ENCODE measurements at regions of chr7 and their contacts with region 1.

Region 1: DNA sequence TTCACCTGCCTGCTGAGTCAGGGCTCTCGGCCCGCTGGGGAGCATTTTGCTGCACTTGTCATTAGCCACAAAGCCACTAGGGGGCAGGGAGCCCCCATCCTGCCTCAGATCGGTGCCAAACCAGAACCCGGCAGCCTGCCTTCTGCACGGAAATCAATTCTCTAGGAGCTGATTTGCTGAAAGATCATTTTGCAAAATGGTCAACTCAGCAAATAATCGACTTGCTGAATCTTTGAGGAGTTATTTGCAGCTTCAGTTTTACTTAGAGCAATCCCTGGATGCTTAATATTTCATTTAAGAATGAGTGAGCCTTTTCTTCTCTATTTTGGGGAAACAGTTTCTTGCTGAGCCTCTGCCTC is 1.7 kb upstream of the GIMAP8 start:
- DNase-seq: peak; percentile 73 to 91 (median 88)
- ATAC-seq: peak; percentile 73
- H3K4me3 ChIP-seq: peak overlapping the region; percentile 65
- H3K4me3 Mint-ChIP-seq: peak overlapping the region; percentile 94 to 100 (median 98)
- H3K27ac ChIP-seq: peak overlapping the region; percentile 84
- H3K27ac Mint-ChIP-seq: peak overlapping the region; percentile 95 to 99 (median 97)
- H3K4me1 ChIP-seq: peaks cover 32 to 36% of the 10 kb centered on the region in 2 donors
- H3K4me1 Mint-ChIP-seq: peaks cover 36 to 54% (median 43%) of the 10 kb centered on the region in 7 donors
- H3K27me3 ChIP-seq: no peaks in the 10 kb centered on the region
- H3K27me3 Mint-ChIP-seq: no peaks in the 10 kb centered on the region

Region 2: DNA sequence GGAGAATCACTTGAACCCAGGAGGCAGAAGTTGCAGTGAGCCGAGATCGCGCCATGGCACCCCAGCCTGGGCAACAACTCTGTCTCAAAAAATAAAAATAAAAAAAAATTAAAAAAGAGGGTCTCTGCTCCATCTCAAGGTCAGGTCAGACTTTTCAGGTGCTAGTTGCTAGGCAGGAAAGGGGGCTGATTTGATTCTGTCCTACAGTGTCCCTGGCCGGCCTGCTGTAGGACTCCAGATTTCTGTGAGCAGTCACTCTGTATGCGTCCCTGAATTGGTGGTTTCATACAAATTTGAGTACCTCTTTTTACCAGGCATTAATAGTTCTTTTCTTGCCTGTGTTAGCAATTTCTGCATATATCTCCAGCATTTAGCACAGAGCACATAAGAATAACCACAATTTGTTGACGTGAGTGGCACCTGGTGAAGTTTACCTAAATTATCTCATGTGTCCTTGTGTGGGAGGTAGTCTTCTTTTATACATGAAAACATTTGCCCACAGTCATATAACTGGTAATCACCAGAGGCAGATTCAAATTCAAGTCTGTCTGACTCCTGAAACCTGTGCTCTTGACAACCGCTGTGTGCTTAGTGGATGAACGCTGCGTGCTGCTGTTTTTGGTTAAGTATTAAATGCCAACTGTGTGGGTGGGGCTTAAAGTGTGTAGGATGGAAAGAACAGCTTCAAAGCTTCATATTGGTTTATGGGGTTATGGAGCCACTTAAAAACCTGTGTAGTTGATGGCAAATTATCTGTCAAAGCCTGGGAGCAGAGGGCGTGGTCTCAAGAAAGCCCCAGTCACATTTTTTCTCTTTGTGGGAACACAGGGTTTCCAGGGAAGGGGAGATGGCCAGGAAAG is 72.9 kb before region 1 on chr7:
- CTCF ChIA-PET with region 1: no interaction called
- POLR2A ChIA-PET with region 1: no interaction called
- intact Hi-C with region 1: no loop called
- DNase-seq: peak in 6 of 9 donors; percentile 34 to 69 (median 52)
- ATAC-seq: peak; percentile 12
- H3K4me3 ChIP-seq: no peak overlapping the region
- H3K4me3 Mint-ChIP-seq: peak overlapping the region in 9 of 10 donors; percentile 19 to 71 (median 51)
- H3K27ac ChIP-seq: peak overlapping the region; percentile 48
- H3K27ac Mint-ChIP-seq: peak overlapping the region; percentile 12 to 94 (median 90)
- H3K4me1 ChIP-seq: peaks cover 4 to 30% of the 10 kb centered on the region in 2 donors
- H3K4me1 Mint-ChIP-seq: peaks cover 30 to 71% (median 60%) of the 10 kb centered on the region in 7 donors
- H3K27me3 ChIP-seq: no peaks in the 10 kb centered on the region
- H3K27me3 Mint-ChIP-seq: no peaks in the 10 kb centered on the region

Region 3: GRCh38 chr7:150466477-150466876 is 17.7 kb after region 1 on chr7:
- CTCF ChIA-PET with region 1: interaction called, 3 read pairs
- POLR2A ChIA-PET with region 1: interaction called, 580 read pairs
- intact Hi-C with region 1: loop called in 1 of 2 experiments (anchors 1 kb)
- DNase-seq: no peak
- ATAC-seq: no peak
- H3K4me3 ChIP-seq: no peak overlapping the region
- H3K4me3 Mint-ChIP-seq: peak overlapping the region in 7 of 10 donors; percentile 46 to 91 (median 61)
- H3K27ac ChIP-seq: peak overlapping the region; percentile 34
- H3K27ac Mint-ChIP-seq: peak overlapping the region in 7 of 9 donors; percentile 70 to 97 (median 86)
- H3K4me1 ChIP-seq: peaks cover 50 to 60% of the 10 kb centered on the region in 2 donors
- H3K4me1 Mint-ChIP-seq: peaks cover 61 to 98% (median 95%) of the 10 kb centered on the region in 7 donors
- H3K27me3 ChIP-seq: no peaks in the 10 kb centered on the region
- H3K27me3 Mint-ChIP-seq: no peaks in the 10 kb centered on the region

Region 4: DNA sequence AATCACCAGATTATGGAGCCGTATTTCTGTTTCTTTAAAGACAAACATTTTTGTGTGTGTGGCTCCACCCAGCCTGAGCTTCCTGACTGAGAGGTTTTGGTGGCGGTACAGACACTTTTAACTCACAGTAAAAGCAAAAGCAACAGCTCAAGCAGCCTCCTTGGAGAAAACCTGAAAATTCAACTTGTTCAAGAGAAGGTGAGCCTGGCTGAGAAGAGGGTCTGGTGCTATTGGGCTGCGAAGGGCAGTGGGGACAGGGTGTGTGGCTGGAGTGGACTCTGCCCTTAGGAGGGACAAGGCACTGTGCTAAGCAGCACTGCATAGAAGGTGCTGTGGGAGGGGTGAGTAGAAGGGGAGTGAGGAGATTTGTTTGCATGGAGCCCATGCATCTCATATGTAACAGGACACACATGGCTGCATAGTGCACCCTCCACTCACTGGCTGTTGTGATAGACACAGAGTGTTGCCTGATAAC is 66.0 kb after region 1 on chr7 and contains the start of gene GIMAP7:
- CTCF ChIA-PET with region 1: interaction called, 91 read pairs
- POLR2A ChIA-PET with region 1: interaction called, 829 read pairs
- intact Hi-C with region 1: loop called (anchors 1 kb)
- DNase-seq: peak; percentile 38 to 90 (median 82)
- ATAC-seq: peak; percentile 86
- H3K4me3 ChIP-seq: peak within 1 kb of the TSS; percentile 94
- H3K4me3 Mint-ChIP-seq: peak within 1 kb of the TSS; percentile 93 to 100 (median 99)
- H3K27ac ChIP-seq: peak within 1 kb of the TSS; percentile 84
- H3K27ac Mint-ChIP-seq: peak within 1 kb of the TSS; percentile 94 to 99 (median 98)
- H3K4me1 ChIP-seq: peaks cover 45% of the 10 kb centered on the region in 2 donors
- H3K4me1 Mint-ChIP-seq: peaks cover 38 to 48% (median 46%) of the 10 kb centered on the region in 7 donors
- H3K27me3 ChIP-seq: no peaks in the 10 kb centered on the region
- H3K27me3 Mint-ChIP-seq: no peaks in the 10 kb centered on the region
- total RNA-seq, gene GIMAP7: 66.3 to 555 (median 321) TPM

Region 5: GRCh38 chr7:150620617-150621371 is 172.0 kb after region 1 on chr7:
- CTCF ChIA-PET with region 1: interaction called, 3 read pairs
- POLR2A ChIA-PET with region 1: interaction called, 20 read pairs
- intact Hi-C with region 1: no loop called
- DNase-seq: no peak
- ATAC-seq: no peak
- H3K4me3 ChIP-seq: no peak overlapping the region
- H3K4me3 Mint-ChIP-seq: peak overlapping the region; percentile 27 to 73 (median 54)
- H3K27ac ChIP-seq: peak overlapping the region; percentile 60
- H3K27ac Mint-ChIP-seq: peak overlapping the region; percentile 64 to 97 (median 88)
- H3K4me1 ChIP-seq: peaks cover 0 to 25% of the 10 kb centered on the region in 2 donors
- H3K4me1 Mint-ChIP-seq: peaks cover 25 to 84% (median 68%) of the 10 kb centered on the region in 7 donors
- H3K27me3 ChIP-seq: no peaks in the 10 kb centered on the region
- H3K27me3 Mint-ChIP-seq: no peaks in the 10 kb centered on the region

Region 6: DNA sequence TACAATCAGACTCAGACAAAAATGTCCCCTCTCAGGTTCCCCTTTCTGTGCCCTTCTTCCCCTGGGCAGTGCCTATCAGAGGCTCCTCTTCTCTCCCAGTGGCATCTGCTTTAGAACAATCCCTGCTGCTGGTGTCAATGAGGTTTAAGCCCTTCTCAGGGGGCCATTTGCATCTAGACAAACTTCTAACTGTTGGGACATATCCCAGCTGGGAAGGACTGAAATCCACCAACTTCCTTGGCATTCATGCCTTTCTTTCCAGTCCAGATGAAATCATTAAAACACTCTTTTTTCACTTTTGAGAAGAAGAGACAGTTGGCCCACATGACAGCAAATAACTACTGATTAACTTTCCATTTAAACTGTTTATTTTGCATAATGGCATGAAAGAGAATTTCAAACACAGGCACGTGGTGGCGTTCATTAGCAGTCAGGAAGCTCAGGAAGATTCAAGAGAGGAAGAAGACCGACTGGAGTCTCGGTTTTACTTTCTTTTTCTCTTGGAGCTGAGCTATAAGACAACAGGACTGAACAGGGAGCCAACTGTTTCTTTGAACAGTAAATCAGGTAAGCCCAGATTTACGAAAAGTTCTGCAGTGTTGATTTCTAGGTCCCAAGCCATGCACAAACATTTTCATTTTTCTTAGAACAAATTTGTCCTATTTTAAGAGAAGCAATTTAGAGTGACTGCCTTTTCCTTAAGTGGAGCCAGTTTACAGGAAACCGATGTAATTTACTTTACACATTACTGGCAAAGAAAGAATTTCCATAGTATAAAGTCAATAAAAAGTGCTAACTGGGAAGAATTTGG is 236.7 kb after region 1 on chr7 and contains the start of gene GIMAP2:
- CTCF ChIA-PET with region 1: interaction called, 5 read pairs
- POLR2A ChIA-PET with region 1: interaction called, 34 read pairs
- intact Hi-C with region 1: no loop called
- DNase-seq: peak in 7 of 9 donors; percentile 40 to 73 (median 65)
- ATAC-seq: peak; percentile 90
- H3K4me3 ChIP-seq: peak within 1 kb of the TSS; percentile 97
- H3K4me3 Mint-ChIP-seq: peak within 1 kb of the TSS; percentile 88 to 100 (median 98)
- H3K27ac ChIP-seq: peak within 1 kb of the TSS; percentile 78
- H3K27ac Mint-ChIP-seq: peak within 1 kb of the TSS; percentile 91 to 100 (median 97)
- H3K4me1 ChIP-seq: peaks cover 49 to 53% of the 10 kb centered on the region in 2 donors
- H3K4me1 Mint-ChIP-seq: peaks cover 50 to 87% (median 81%) of the 10 kb centered on the region in 7 donors
- H3K27me3 ChIP-seq: no peaks in the 10 kb centered on the region
- H3K27me3 Mint-ChIP-seq: no peaks in the 10 kb centered on the region
- total RNA-seq, gene GIMAP2: 79.4 to 286 (median 122) TPM

Region 7: DNA sequence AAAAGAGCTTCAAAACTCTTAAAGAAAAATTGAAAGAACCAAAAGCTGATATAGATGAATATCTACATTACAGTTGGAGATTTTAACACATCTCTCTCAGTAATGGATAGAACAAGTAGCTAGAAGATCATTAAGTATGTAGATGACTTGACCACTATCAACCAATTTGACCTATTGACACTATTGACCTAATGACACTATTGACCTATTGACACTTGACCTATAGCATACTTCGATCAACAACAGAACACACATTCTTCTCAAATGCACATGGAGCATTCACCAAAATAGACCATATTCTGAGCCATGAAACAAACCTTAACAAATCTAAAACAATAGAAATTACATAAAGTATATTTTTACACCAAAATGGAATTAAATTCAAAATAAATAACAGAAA is 310.7 kb after region 1 on chr7:
- CTCF ChIA-PET with region 1: interaction called, 23 read pairs
- POLR2A ChIA-PET with region 1: interaction called, 132 read pairs
- intact Hi-C with region 1: loop called (anchors 1 kb)
- DNase-seq: no peak
- ATAC-seq: no peak
- H3K4me3 ChIP-seq: no peak overlapping the region
- H3K4me3 Mint-ChIP-seq: no peak overlapping the region
- H3K27ac ChIP-seq: no peak overlapping the region
- H3K27ac Mint-ChIP-seq: no peak overlapping the region
- H3K4me1 ChIP-seq: peaks cover 18 to 20% of the 10 kb centered on the region in 2 donors
- H3K4me1 Mint-ChIP-seq: peaks cover 12 to 29% (median 28%) of the 10 kb centered on the region in 7 donors
- H3K27me3 ChIP-seq: no peaks in the 10 kb centered on the region
- H3K27me3 Mint-ChIP-seq: peaks cover 0 to 15% (median 0%) of the 10 kb centered on the region in 5 donors

Measured in naive thymus-derived CD4-positive, alpha-beta T cell (primary cell).